Right lobe of liver (tissue), 6 donors: ENCODE measurements at regions of chr15 and their contacts with region 1.

Region 1: DNA sequence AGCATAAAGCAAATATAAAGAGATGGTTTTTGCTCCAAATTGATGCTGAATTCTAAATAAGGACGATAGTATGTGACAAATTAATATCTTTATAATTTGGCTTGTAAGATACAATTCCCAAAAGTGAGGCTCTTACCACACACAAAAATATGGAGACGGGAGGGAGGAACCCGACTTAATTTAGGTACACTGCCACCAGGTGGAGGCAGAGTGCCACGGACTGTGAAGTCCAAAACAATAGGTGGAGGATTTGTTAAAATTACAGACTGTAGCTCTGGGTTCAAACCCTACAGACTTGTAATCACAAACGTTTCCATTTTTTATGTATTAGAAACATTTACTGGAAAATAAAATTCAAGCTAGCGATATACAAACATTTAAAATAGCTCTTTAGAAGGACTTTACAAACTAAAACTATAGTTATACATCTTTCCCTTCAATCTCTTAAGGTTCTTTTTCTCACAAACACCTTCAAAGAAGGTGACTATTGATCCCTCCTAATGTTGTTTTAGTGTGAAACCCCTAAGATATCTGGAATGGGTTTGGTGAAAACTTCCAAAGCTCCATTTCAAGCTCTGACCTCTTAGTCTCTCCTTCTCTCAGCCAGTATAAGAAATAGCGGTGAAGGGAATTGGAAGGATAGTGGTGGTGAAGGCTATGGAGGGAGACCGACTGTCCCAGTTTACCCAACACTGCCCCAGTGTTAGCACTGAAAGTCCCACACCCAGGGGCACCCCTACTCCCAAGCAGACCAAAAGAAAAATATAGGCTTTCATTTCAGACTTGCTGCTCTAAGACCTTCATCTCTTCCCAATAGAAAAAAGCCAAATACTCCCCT is 89.7 kb downstream of the AQP9 start:
- DNase-seq: peak; percentile 70 to 78 (median 73)
- ATAC-seq: peak; percentile 83 to 88 (median 86)
- H3K4me3 ChIP-seq: no peak overlapping the region
- H3K27ac ChIP-seq: peak overlapping the region in 1 of 3 donors; percentile 9
- H3K4me1 ChIP-seq: peaks cover 0 to 5% (median 0%) of the 10 kb centered on the region in 4 donors
- H3K27me3 ChIP-seq: no peaks in the 10 kb centered on the region
- CTCF ChIP-seq: peak; percentile 81 to 94 (median 91)
- POLR2A ChIP-seq: no peak

Region 2: DNA sequence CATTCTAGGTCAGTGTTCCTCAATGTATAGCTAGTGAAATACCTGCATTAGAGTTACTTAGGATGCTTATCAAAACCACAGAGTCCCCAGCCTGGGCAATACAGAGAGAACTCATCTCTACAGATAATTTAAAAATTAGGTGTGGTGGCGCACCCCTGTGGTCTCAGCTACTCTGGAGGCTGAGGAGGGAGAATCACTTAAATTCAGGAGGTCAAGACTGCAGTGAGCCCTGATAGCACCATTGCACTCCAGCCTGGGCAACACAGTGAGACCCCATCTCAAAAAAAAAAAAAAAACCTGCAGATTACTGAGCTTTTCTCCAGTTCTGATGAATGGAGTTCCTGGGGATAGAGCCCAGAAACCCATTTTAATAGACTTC is 533.1 kb after region 1 on chr15:
- intact Hi-C with region 1: loop called in 1 of 2 experiments (anchors 10 kb)
- DNase-seq: no peak
- ATAC-seq: no peak
- H3K4me3 ChIP-seq: no peak overlapping the region
- H3K27ac ChIP-seq: no peak overlapping the region
- H3K4me1 ChIP-seq: no peaks in the 10 kb centered on the region
- H3K27me3 ChIP-seq: no peaks in the 10 kb centered on the region
- CTCF ChIP-seq: no peak
- POLR2A ChIP-seq: no peak